ENCODE measurements at regions of chr12 and their contacts with region 1.

Region 1: GRCh38 chr12:58359084-58359483 is 417.7 kb downstream of the ATP23 start:
- DNase-seq: no peak
- ATAC-seq: no peak
- H3K4me3 ChIP-seq: no peak overlapping the region
- H3K27ac ChIP-seq: no peak overlapping the region
- H3K4me1 ChIP-seq: no peaks in the 10 kb centered on the region
- H3K27me3 ChIP-seq: no peaks in the 10 kb centered on the region
- CTCF ChIP-seq: no peak

Region 2: GRCh38 chr12:58283553-58283952 is 75.5 kb before region 1 on chr12:
- intact Hi-C with region 1: no loop called
- DNase-seq: no peak
- ATAC-seq: no peak
- H3K4me3 ChIP-seq: no peak overlapping the region
- H3K27ac ChIP-seq: no peak overlapping the region
- H3K4me1 ChIP-seq: no peaks in the 10 kb centered on the region
- H3K27me3 ChIP-seq: no peaks in the 10 kb centered on the region
- CTCF ChIP-seq: no peak

Region 3: DNA sequence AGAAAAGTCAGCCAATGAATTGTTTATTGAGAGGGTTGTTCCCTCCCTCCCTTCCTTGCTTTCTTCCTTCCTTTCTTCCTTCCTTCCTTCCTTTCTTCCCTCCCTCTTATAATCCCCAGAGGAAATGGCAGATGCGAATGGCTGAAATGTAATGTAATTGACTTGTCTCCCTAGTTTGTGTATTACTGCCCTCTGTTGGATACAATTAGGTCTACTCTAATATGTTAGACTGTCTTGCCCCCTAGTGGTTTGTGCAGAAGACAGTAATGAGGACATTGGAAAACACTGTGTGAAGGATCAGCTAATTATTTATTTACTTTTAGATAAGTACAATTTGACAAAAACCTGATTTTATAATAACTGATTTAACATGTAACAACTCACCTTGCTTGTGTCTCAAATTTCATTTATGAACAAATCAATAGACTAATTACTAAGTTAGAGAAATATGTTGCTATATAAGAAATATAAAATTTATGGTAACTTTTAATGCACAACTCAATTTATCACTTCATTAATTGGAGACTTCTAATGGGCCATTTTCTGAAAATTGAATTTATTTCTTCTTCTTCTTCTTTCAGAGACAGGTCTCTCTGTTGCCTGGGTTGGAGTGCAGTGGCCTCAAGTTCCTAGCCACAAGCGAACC is 791.0 kb after region 1 on chr12:
- intact Hi-C with region 1: loop called in 1 of 3 experiments (anchors 10 kb)
- DNase-seq: peak in 3 of 6 donors; percentile 6 to 27 (median 15)
- ATAC-seq: peak; percentile 98 to 100 (median 99)
- H3K4me3 ChIP-seq: no peak overlapping the region
- H3K27ac ChIP-seq: no peak overlapping the region
- H3K4me1 ChIP-seq: no peaks in the 10 kb centered on the region
- H3K27me3 ChIP-seq: no peaks in the 10 kb centered on the region
- CTCF ChIP-seq: peak; percentile 65 to 95 (median 78)

Measured in pancreas (tissue), 10 donors.